Psoas muscle (tissue), 8 donors: ENCODE measurements at regions of chr15 and their contacts with region 1.

Region 1: GRCh38 chr15:48570822-48571221 is 74.7 kb downstream of the FBN1 start:
- DNase-seq: no peak
- ATAC-seq: no peak
- H3K4me3 ChIP-seq: no peak overlapping the region
- H3K27ac ChIP-seq: no peak overlapping the region
- H3K4me1 ChIP-seq: no peaks in the 10 kb centered on the region
- H3K27me3 ChIP-seq: no peaks in the 10 kb centered on the region
- CTCF ChIP-seq: no peak

Region 2: DNA sequence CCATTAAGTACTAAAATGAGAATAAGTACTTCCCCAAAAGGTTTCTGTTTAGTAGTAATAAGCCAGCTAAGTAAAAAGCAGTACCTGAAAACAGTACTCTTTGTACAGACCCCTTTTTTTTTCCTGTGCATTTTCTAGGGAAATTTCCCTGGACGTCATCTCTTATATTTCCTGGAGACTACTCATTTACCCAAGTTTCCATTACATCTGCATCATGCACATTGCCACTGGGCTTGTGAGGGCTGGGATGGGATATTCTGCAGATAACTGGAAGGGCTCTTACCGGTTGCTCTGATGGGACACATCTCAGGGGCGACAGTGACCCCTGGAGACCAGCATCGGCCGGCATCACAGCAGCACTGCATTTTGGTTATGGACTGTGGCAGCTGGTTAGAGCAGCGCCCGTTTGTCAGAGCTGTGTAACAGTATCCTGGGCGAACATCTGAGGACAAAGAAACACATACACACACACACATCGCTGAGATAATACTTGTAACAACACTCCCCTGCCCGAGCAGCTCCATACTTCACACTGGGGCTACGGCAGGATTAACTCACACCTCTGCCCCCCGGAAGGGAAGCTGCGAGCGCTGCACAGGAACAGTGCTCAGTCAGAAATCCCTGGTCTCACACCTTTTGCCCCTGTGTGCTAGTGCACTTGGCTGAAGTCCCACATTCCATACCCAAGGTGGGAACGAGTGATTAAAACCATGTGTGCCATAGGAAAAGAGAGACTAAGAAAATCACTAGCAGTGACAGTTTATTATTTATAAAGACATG is 50.3 kb before region 1 on chr15:
- intact Hi-C with region 1: loop called in 1 of 2 experiments (anchors 5 kb)
- DNase-seq: no peak
- ATAC-seq: peak in 3 of 4 donors; percentile 37 to 78 (median 42)
- H3K4me3 ChIP-seq: no peak overlapping the region
- H3K27ac ChIP-seq: no peak overlapping the region
- H3K4me1 ChIP-seq: no peaks in the 10 kb centered on the region
- H3K27me3 ChIP-seq: no peaks in the 10 kb centered on the region
- CTCF ChIP-seq: no peak